ENCODE measurements at regions of chr6 and their contacts with region 1.

Region 1: GRCh38 chr6:111361648-111362047 is 121.4 kb downstream of the REV3L start:
- DNase-seq: peak; percentile 23
- H3K4me3 ChIP-seq: no peak overlapping the region
- H3K27ac ChIP-seq: no peak overlapping the region
- H3K4me1 ChIP-seq: peaks cover 0 to 2% (median 0%) of the 10 kb centered on the region in 4 donors
- H3K27me3 ChIP-seq: no peaks in the 10 kb centered on the region
- CTCF ChIP-seq: peak; percentile 27 to 47 (median 32)
- EP300 ChIP-seq: no peak
- POLR2A ChIP-seq: no peak

Region 2: DNA sequence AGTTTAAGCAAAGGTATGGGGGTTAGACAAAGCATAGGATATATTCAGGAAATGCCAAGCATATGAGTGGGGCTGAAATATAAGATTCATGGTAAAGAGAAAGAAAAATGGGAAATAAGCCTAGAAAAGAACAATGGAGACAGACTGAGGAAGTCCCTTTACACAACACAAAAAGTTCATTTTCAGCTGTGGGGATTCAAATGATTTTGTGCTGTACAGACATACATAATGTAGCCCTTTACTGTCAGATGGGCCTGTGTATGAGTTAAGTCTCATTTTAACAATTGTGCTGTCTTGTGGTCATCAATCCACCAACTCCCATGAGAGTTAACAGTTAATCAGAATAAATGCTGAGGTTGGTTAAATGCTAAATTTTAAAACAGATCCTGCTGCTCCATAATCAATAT is 84.2 kb after region 1 on chr6:
- in situ Hi-C with region 1: no loop called
- intact Hi-C with region 1: no loop called
- DNase-seq: no peak
- H3K4me3 ChIP-seq: no peak overlapping the region
- H3K27ac ChIP-seq: no peak overlapping the region
- H3K4me1 ChIP-seq: peaks cover 0 to 27% (median 4%) of the 10 kb centered on the region in 4 donors
- H3K27me3 ChIP-seq: no peaks in the 10 kb centered on the region
- CTCF ChIP-seq: no peak
- EP300 ChIP-seq: no peak
- POLR2A ChIP-seq: no peak

Region 3: GRCh38 chr6:111478749-111479148 is 117.1 kb after region 1 on chr6:
- in situ Hi-C with region 1: no loop called
- intact Hi-C with region 1: loop called (anchors 10 kb)
- DNase-seq: no peak
- H3K4me3 ChIP-seq: no peak overlapping the region
- H3K27ac ChIP-seq: peak overlapping the region; percentile 33 to 100 (median 68)
- H3K4me1 ChIP-seq: peaks cover 13 to 52% (median 34%) of the 10 kb centered on the region in 4 donors
- H3K27me3 ChIP-seq: no peaks in the 10 kb centered on the region
- CTCF ChIP-seq: peak; percentile 25 to 40 (median 28)
- EP300 ChIP-seq: no peak
- POLR2A ChIP-seq: no peak